ENCODE measurements at regions of chr11 and their contacts with region 1.

Region 1: DNA sequence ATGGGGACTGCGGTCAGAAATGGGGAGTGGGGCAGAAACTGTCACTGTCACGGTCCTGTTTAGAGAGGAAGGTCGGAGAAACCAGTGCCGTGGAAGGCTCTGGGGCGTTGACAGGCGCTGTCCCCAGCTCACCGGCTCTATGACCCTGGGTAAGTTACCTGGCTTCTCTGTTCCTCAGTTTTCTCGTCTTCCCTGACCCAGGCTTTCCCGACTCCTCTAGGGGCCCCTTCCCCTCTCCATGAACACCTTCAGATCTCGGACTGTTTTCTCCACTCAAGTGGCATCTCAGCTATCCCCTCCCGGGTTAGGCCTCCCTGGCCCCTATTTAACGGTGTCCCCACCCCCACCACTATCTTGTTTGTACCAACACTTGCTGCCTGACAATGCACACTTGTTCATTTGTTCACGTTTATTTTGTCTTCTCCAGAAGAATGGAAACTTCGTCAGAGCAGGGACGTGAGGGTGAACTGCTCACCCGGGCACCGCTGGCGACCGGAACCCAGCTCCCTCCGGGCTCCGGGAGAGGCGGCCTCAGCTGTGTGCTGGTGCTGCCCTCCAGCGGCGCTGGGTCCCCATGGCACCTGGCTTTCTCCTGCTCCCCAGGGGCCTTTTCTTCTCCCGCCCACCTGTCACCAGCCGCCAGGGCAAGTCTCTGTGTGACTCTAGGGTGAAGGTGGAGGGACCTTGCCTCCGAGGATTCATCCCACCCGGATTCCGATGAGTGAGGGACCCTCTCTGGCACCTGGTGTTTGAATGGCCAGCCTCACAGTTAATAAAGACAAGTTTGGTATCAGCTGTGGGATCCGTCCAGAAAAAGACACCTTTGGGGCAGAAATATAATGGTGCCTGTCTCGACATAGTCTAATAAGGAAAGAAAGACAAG is 33.1 kb upstream of the SLC35C1 start:
- DNase-seq: peak; percentile 62
- H3K4me3 ChIP-seq: peak overlapping the region; percentile 27 to 45 (median 42)
- H3K27ac ChIP-seq: no peak overlapping the region
- H3K4me1 ChIP-seq: peaks cover 8% of the 10 kb centered on the region
- H3K27me3 ChIP-seq: no peaks in the 10 kb centered on the region
- CTCF ChIP-seq: peak; percentile 79 to 98

Region 2: DNA sequence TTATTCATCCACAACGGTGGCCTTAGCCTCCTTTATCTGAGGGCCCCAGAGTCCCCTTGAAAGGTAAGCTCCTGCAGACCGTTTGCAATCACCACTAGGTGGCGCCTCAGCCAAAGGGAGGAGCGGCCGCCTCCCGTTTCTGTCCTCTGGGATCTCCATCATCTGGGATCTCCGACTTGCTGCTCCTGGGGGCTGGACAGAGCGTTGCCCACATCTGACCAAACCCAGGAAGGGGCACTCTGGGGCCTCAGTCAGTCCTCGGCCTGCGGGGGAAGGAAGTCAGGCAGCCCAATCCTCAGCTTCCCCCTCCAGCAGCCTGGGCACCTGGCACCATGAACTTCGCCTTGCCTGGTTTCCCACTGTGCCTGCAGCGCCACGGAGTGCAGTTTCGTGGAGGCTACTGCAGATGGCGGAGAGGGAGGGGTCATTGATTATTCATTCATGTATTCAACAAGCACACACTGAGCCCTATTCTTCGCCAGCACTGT is 844.6 kb before region 1 on chr11:
- CTCF ChIA-PET with region 1: no interaction called
- dilution Hi-C with region 1: no loop called
- in situ Hi-C with region 1: no loop called
- intact Hi-C with region 1: loop called (anchors 5 kb)
- DNase-seq: peak; percentile 32
- H3K4me3 ChIP-seq: no peak overlapping the region
- H3K27ac ChIP-seq: no peak overlapping the region
- H3K4me1 ChIP-seq: no peaks in the 10 kb centered on the region
- H3K27me3 ChIP-seq: peaks cover 5% of the 10 kb centered on the region
- CTCF ChIP-seq: peak; percentile 75 to 87

Region 3: GRCh38 chr11:45339729-45340519 is 431.9 kb before region 1 on chr11:
- CTCF ChIA-PET with region 1: interaction called, 5 read pairs
- dilution Hi-C with region 1: no loop called
- in situ Hi-C with region 1: no loop called
- intact Hi-C with region 1: loop called (anchors 1 kb)
- DNase-seq: peak; percentile 68
- H3K4me3 ChIP-seq: no peak overlapping the region
- H3K27ac ChIP-seq: no peak overlapping the region
- H3K4me1 ChIP-seq: peaks cover 11% of the 10 kb centered on the region
- H3K27me3 ChIP-seq: peaks cover 8% of the 10 kb centered on the region
- CTCF ChIP-seq: peak; percentile 84 to 85

Region 4: DNA sequence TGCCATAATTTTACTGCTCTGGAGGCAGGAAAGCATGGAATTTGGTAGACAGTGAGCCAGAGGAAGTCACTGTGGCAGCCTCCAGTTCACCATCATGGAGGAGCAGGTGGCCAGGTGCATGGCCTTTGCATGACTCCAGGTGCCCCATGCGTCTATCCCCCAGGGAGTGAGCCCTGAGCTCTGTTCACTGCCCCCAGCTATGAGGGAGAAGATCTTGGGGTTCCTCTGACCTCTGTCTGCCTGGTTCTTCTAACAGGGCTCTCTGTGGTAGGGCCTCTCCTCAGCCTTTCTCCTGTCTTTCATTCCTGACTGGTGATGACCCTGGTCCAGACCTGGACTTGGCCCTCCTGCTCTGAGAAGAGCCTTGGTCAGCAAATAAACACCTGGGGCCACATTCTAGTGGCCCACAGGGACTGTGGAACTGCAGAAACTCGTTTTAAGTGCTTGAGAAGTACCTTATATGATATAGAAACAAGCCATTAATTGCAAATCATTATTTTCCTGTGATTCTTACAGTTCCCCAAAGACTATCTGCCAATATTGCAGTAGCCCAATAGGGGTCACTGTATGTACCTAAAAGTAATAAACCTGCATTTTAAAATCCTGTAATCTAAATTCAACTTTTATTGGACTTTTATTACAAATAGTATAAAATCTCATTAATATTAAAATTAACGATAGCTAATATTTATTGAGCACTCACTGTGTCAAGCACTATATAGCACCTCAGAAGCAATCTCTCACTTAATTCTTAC is 365.7 kb before region 1 on chr11:
- CTCF ChIA-PET with region 1: no interaction called
- dilution Hi-C with region 1: no loop called
- in situ Hi-C with region 1: no loop called
- intact Hi-C with region 1: loop called (anchors 1 kb)
- DNase-seq: no peak
- H3K4me3 ChIP-seq: no peak overlapping the region
- H3K27ac ChIP-seq: no peak overlapping the region
- H3K4me1 ChIP-seq: no peaks in the 10 kb centered on the region
- H3K27me3 ChIP-seq: peaks cover 2% of the 10 kb centered on the region
- CTCF ChIP-seq: peak; percentile 39 to 58

Region 5: DNA sequence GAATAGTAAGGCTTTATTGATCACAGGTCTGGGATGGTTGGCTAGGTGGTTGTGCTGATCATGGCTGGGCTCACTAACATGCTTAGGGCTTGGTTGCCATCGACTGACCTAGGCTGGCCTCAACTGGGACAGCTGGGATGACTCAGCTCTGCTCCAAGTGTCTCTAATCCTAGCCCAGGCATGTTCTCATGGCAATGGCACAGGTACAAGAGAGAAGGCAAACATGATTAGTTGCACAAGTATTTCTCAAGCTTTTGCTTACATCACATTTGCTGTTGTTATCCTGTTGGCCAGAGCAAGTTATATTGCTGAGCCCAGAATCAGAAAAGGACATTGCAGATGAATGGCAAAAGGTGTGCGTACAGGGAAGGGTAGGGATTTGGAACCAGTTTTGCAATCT is 35.4 kb before region 1 on chr11:
- CTCF ChIA-PET with region 1: no interaction called
- dilution Hi-C with region 1: no loop called
- in situ Hi-C with region 1: no loop called
- intact Hi-C with region 1: loop called (anchors 2 kb)
- DNase-seq: peak; percentile 95
- H3K4me3 ChIP-seq: peak overlapping the region in 1 of 3 experiments; percentile 1
- H3K27ac ChIP-seq: peak overlapping the region; percentile 98
- H3K4me1 ChIP-seq: peaks cover 21% of the 10 kb centered on the region
- H3K27me3 ChIP-seq: no peaks in the 10 kb centered on the region
- CTCF ChIP-seq: no peak

Region 6: GRCh38 chr11:46170797-46171196 is 399.0 kb after region 1 on chr11:
- CTCF ChIA-PET with region 1: no interaction called
- dilution Hi-C with region 1: no loop called
- in situ Hi-C with region 1: no loop called
- intact Hi-C with region 1: no loop called
- DNase-seq: no peak
- H3K4me3 ChIP-seq: no peak overlapping the region
- H3K27ac ChIP-seq: no peak overlapping the region
- H3K4me1 ChIP-seq: no peaks in the 10 kb centered on the region
- H3K27me3 ChIP-seq: no peaks in the 10 kb centered on the region
- CTCF ChIP-seq: no peak

Measured in mammary epithelial cell (primary cell).